GM10248 (cell line): ENCODE measurements at regions of chr11 and their contacts with region 1.

Region 1: GRCh38 chr11:86218125-86219084 is 26.1 kb upstream of the EED start:
- DNase-seq: peak; percentile 48
- CTCF ChIP-seq: peak; percentile 54

Region 2: DNA sequence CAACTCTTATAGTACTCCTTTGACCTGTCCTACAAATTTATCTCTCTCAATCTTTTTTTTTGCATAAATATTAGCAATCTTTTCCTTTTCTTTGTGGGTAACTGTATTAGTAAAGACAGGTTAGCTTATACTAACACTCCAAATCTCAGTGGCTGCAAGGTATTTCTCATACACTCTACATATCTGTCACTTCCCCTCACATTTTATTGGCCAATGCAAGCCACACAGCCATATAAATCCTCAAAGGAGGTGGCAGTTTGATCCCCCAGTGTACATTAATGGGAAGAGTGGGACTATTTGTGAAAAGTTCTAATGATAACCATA is 16.4 kb before region 1 on chr11:
- CTCF ChIA-PET with region 1: interaction called, 18 read pairs
- POLR2A ChIA-PET with region 1: no interaction called
- DNase-seq: no peak
- CTCF ChIP-seq: no peak

Region 3: DNA sequence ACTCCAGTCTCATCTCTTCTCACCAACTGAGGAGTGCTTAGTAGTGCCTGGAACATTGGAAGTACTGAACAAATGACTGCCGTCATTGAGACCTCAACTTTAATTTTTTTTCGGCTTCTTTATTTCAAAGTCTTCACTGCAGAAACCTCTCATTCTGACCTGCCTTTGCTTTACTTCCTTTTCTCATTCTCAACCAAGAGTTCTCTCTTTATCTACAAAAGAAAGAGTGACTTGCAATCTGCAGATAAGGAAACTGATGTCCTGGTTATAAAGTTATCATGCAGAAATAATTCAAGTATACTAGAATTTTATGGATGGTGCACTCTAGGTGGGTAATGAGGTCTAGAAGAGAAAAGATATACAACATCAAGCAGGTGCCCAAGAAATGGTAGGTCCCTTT is 25.0 kb after region 1 on chr11:
- CTCF ChIA-PET with region 1: interaction called, 40 read pairs
- POLR2A ChIA-PET with region 1: no interaction called
- DNase-seq: no peak
- CTCF ChIP-seq: no peak

Region 4: DNA sequence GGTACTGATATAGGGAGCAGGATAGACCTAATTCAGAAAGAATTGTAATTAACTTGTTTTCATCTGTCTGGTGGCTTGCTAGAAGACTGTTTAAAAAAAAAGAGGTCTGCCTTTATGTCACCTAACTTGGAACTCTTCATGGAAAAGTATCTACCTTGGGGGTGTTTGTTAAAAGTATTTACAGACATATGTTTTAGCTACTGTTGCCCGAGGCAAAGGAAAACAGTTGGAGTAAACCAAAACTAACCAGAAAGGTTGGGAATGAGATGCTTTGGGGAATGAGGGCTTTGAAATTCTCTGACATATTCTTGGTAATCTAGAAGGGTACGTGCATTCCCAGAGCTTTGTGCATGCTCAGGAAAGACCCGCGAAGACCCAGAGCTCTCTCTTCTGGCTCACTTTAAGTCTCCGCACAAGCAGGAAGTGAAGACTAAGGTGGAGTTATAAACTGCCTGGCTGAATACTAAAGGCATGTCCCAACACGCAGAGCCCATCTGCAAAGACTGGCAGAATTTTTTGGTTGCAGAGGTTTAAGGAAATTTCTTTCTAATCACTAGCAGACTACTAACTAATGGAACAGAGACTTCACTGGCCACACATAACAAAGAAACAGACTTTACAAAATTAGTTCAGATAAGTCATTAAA is 116.8 kb after region 1 on chr11:
- CTCF ChIA-PET with region 1: no interaction called
- POLR2A ChIA-PET with region 1: interaction called, 12 read pairs
- DNase-seq: no peak
- CTCF ChIP-seq: no peak